ENCODE measurements at regions of chr19 and their contacts with region 1.

Region 1: DNA sequence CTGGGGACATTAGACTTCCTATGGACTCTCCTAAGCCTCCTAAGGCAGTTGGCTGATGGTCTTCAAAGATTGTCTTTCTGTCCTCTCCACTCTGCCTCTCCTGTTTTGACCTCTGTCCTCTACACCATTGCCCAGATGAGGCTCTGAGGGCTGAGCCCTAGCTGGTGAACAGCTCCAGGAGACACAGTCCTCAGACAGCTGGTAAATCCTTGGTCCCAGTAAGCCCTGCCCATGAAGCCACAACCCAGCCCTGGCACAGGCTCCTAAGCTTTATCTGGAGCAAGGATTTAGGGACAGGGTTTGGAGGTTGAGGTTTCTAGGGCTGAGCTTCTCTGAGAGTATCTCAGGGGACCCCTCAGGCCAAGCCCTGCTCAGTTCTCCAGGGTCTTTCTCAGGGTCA is 2.3 kb downstream of the PSG2 start:
- DNase-seq: no peak
- ATAC-seq: no peak
- H3K4me3 ChIP-seq: no peak overlapping the region
- H3K27ac ChIP-seq: no peak overlapping the region
- H3K4me1 ChIP-seq: no peaks in the 10 kb centered on the region
- H3K27me3 ChIP-seq: no peaks in the 10 kb centered on the region
- CTCF ChIP-seq: no peak
- POLR2A ChIP-seq: no peak

Region 2: DNA sequence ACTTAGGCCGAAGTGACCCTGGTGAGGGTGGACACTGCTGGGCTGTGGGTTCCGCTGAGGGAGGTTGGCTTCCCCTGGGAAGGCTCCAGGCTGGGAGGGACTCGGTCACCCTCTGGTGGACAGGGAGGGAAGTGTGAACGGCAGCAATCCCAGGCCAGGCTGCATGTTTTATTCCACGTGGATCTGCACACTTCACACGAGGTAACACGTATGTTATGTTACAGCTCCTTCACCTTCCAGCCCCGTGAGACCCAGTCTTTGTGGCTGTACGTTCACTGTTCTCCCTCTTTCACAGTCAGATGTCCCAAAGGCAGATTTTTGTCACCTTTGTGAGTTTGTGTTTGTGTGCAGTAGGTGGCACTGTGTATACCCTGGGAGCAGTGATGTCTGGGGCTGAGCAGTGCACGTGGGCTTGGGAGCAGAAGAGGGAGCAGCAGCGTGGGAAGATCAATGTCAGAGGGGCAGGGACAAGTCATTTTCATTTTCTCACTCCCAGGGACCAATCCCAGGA is 160.6 kb before region 1 on chr19:
- intact Hi-C with region 1: loop called in 1 of 10 experiments (anchors 10 kb)
- DNase-seq: no peak
- ATAC-seq: no peak
- H3K4me3 ChIP-seq: no peak overlapping the region
- H3K27ac ChIP-seq: no peak overlapping the region
- H3K4me1 ChIP-seq: no peaks in the 10 kb centered on the region
- H3K27me3 ChIP-seq: peaks cover 0 to 5% (median 0%) of the 10 kb centered on the region in 9 donors
- CTCF ChIP-seq: peak in 5 of 12 donors; percentile 3 to 20 (median 13)
- POLR2A ChIP-seq: no peak

Region 3: GRCh38 chr19:42926781-42927180 is 153.4 kb before region 1 on chr19:
- intact Hi-C with region 1: loop called in 3 of 10 experiments (anchors 5 to 10 kb)
- DNase-seq: no peak
- ATAC-seq: no peak
- H3K4me3 ChIP-seq: no peak overlapping the region
- H3K27ac ChIP-seq: no peak overlapping the region
- H3K4me1 ChIP-seq: no peaks in the 10 kb centered on the region
- H3K27me3 ChIP-seq: peaks cover 0 to 14% (median 0%) of the 10 kb centered on the region in 9 donors
- CTCF ChIP-seq: no peak
- POLR2A ChIP-seq: no peak

Measured in heart left ventricle (tissue), 16 donors.